Posterior cingulate gyrus (tissue), 11 donors: ENCODE measurements at regions of chr17 and their contacts with region 1.

Region 1: GRCh38 chr17:60712675-60713074 is 35.0 kb downstream of the BCAS3 start:
- DNase-seq: no peak

Region 2: DNA sequence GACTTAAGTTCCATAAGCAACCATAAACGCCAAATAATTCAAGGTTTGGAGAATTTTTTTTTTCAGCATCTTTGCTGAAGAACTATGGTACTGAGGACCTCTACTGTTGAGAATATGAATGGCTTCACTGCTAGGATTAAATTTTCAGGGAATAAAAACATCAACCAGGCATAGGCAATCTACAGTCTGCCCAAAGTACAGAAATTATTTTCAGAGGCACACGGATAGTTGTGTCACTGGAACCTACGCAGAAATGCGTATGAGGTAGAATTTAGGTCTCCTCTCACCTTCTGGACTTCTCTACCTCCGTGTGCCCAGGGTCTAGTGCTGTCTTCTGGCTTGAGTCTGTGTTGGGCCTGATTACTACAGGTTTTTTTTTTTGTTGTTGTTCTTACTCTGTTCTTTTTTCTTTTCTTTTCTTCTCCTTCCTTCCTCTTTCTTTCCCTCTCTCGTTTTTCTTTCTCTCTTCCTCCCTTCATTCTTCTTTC is 838.6 kb after region 1 on chr17:
- intact Hi-C with region 1: loop called (anchors 10 kb)
- DNase-seq: no peak